Activated naive CD4-positive, alpha-beta T cell treated with anti-CD3 and anti-CD28 coated beads, Interleukin-2, amount 10 ng/mL, durations not matched to agents 7 days and 5 days (primary cell): ENCODE measurements at regions of chr11 and their contacts with region 1.

Region 1: GRCh38 chr11:45110562-45110961 is 35.9 kb upstream of the PRDM11 start:
- DNase-seq: peak; percentile 47
- H3K4me3 Mint-ChIP-seq: no peak overlapping the region
- H3K27ac Mint-ChIP-seq: no peak overlapping the region
- H3K4me1 Mint-ChIP-seq: no peaks in the 10 kb centered on the region
- H3K27me3 Mint-ChIP-seq: peaks cover 28% of the 10 kb centered on the region

Region 2: DNA sequence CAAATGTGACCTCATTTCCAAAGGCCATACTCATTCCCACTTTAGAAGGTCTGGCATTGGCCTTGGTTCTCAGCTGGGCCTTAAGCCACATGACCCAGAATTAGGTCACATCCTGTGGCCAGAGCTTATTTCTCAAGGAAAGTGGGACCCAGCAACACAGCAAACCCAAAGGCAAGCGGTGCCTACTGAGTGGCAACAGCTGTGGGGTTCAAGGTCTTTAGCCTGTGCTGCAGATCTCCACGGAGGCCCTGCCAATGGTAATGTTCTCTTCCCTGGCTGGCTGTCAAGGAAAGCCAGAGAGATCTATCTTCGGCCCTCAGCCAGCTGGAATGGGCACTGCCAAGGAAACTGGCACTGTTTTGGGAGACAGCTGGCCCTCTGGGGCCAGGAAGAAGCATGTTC is 118.4 kb before region 1 on chr11:
- CTCF ChIA-PET with region 1: no interaction called
- DNase-seq: no peak
- H3K4me3 Mint-ChIP-seq: no peak overlapping the region
- H3K27ac Mint-ChIP-seq: no peak overlapping the region
- H3K4me1 Mint-ChIP-seq: no peaks in the 10 kb centered on the region
- H3K27me3 Mint-ChIP-seq: peaks cover 28% of the 10 kb centered on the region

Region 3: GRCh38 chr11:45289369-45289768 is 178.8 kb after region 1 on chr11:
- CTCF ChIA-PET with region 1: interaction called, 18 read pairs
- DNase-seq: no peak
- H3K4me3 Mint-ChIP-seq: no peak overlapping the region
- H3K27ac Mint-ChIP-seq: no peak overlapping the region
- H3K4me1 Mint-ChIP-seq: no peaks in the 10 kb centered on the region
- H3K27me3 Mint-ChIP-seq: peaks cover 67% of the 10 kb centered on the region

Region 4: GRCh38 chr11:45294499-45294898 is 183.9 kb after region 1 on chr11:
- CTCF ChIA-PET with region 1: interaction called, 18 read pairs
- DNase-seq: no peak
- H3K4me3 Mint-ChIP-seq: no peak overlapping the region
- H3K27ac Mint-ChIP-seq: no peak overlapping the region
- H3K4me1 Mint-ChIP-seq: no peaks in the 10 kb centered on the region
- H3K27me3 Mint-ChIP-seq: peaks cover 34% of the 10 kb centered on the region

Region 5: GRCh38 chr11:45332276-45332934 is 221.8 kb after region 1 on chr11:
- CTCF ChIA-PET with region 1: interaction called, 108 read pairs
- DNase-seq: peak; percentile 45
- H3K4me3 Mint-ChIP-seq: no peak overlapping the region
- H3K27ac Mint-ChIP-seq: no peak overlapping the region
- H3K4me1 Mint-ChIP-seq: no peaks in the 10 kb centered on the region
- H3K27me3 Mint-ChIP-seq: peaks cover 30% of the 10 kb centered on the region